Activated naive CD4-positive, alpha-beta T cell treated with anti-CD3 and anti-CD28 coated beads, Interleukin-2, amount 10 ng/mL, durations not matched to agents 7 days and 5 days (primary cell): ENCODE measurements at regions of chr17 and their contacts with region 1.

Region 1: DNA sequence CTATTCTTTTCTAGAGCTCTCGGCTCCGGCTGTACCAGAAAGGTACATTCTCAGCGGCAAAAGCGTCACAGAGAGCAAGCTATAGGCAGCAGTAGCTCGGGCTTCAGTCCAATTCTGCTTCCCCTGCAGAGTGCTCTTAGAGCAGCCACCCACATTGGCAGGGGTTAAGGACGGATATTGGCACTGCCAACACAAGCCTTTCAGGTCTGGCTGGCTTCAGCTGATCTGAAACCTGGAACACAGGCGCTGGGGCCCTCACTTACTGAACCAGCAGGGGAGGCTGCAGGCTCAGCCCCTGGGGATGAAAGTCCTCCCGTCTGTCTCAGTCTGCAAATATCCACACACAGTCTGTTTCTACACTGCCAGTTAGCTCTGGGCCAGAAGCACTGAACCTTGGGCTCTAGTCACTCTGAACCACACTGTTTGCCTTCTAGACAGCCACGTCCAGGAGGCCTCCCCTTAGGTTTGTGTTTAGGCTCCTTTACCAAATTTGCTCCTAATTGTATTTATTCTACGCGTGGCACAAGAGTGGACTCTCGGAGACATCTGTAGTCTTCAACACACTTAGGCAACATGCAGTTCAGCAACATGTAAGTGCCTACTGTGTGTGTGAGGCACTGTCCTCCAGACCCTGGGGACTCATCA is 40.1 kb downstream of the HIC1 start:
- DNase-seq: no peak
- H3K4me3 Mint-ChIP-seq: no peak overlapping the region
- H3K27ac Mint-ChIP-seq: no peak overlapping the region
- H3K4me1 Mint-ChIP-seq: peaks cover 50% of the 10 kb centered on the region
- H3K27me3 Mint-ChIP-seq: no peaks in the 10 kb centered on the region

Region 2: GRCh38 chr17:1865252-1866037 is 229.6 kb before region 1 on chr17:
- CTCF ChIA-PET with region 1: no interaction called
- DNase-seq: peak; percentile 70
- H3K4me3 Mint-ChIP-seq: no peak overlapping the region
- H3K27ac Mint-ChIP-seq: no peak overlapping the region
- H3K4me1 Mint-ChIP-seq: peaks cover 38% of the 10 kb centered on the region
- H3K27me3 Mint-ChIP-seq: no peaks in the 10 kb centered on the region

Region 3: DNA sequence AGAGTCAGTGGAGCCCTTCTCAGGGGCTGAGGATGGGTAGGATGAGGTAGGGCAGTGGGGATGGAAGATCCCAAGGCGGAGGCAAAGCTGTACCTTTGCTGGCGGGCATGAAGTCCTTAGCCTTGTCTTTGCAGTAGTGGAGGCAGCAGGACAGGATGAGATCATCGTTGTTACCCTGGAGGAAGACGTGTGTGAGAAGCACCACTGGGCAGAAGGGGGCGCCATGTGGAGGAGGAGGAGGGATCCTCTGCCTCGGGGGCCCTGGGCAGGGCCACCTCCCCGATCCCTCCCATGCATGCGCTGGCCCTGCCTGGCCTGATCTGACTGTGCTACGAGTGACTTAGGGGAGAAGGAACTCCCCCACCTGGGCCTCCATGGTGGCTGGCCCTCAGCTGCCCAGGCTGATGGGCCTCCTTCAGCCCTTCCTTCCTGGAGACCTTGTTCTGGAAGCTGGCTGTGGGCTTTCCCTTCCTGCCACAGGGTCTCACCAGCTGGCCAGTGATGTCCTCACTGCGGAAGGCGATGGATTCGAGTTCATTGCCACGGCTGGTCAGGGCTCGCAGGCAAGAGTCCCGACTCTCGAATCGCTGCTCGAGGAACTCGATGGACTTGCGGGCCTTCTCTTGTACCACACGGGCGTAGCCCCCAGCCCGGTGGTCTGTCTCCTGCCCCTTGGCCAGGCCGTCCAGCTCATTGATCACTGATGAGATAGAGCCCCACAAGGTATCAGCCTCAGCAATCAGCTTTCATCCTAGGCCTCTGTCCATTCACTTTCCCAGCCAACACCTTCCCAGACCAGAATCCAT is 29.8 kb before region 1 on chr17:
- CTCF ChIA-PET with region 1: interaction called, 40 read pairs
- DNase-seq: peak; percentile 78
- H3K4me3 Mint-ChIP-seq: no peak overlapping the region
- H3K27ac Mint-ChIP-seq: peak overlapping the region; percentile 52
- H3K4me1 Mint-ChIP-seq: peaks cover 51% of the 10 kb centered on the region
- H3K27me3 Mint-ChIP-seq: no peaks in the 10 kb centered on the region